Esophagus muscularis mucosa (tissue), 4 donors: ENCODE measurements at regions of chr13 and their contacts with region 1.

Region 1: GRCh38 chr13:112606109-112607001 is 18.4 kb upstream of the TUBGCP3 start:
- DNase-seq: peak; percentile 93
- H3K4me3 ChIP-seq: peak overlapping the region; percentile 52 to 61 (median 53)
- H3K27ac ChIP-seq: peak overlapping the region; percentile 65 to 81 (median 76)
- H3K4me1 ChIP-seq: peaks cover 8 to 13% (median 11%) of the 10 kb centered on the region in 4 donors
- H3K27me3 ChIP-seq: no peaks in the 10 kb centered on the region
- CTCF ChIP-seq: peak; percentile 94 to 96 (median 96)
- EP300 ChIP-seq: no peak
- POLR2A ChIP-seq: no peak

Region 2: DNA sequence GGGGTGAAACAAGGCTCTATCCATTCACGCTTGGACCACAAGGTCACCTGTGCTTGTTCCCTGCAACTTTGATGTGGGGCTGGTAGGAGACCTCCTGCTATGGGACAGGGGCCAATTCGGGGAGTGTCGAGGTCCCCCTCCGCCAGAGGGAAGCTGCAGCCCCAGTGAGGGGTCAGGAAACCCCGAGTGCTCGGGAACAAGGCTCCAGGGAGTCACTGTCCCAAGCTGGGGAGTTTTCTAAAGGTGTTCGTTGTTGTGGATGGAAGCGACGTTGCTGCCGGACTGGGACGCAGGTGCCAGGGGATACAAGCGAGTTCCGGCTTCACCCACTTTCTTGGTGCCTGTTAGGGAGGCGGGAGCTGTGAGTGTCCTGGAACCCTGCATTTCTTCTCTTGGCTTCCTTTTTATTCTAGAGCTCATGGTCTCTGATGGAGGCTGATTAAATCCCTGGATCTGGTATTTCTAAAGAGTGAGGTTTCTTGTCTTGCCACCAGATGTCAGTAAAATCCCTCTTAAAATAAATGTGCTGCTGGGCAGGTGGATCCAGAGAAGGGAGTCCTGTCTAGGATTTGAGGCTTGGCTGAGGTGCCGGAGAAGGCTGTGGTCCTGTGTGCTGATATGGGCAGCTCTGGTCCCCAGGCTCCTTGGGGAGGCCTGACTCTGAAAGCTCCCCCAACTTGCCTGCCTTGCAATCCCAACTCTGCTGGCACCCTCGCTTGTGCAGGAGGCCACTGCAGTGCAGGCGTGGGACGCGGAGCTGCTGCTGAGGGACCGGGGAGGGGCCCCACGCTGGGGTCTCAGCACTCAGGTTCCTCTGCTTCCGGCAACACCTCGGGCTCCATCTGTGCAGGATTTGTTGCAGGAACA is 1132.0 kb before region 1 on chr13:
- intact Hi-C with region 1: loop called (anchors 5 kb)
- DNase-seq: no peak
- H3K4me3 ChIP-seq: no peak overlapping the region
- H3K27ac ChIP-seq: no peak overlapping the region
- H3K4me1 ChIP-seq: no peaks in the 10 kb centered on the region
- H3K27me3 ChIP-seq: peaks cover 0 to 47% (median 0%) of the 10 kb centered on the region in 4 donors
- CTCF ChIP-seq: peak; percentile 44 to 59 (median 54)
- EP300 ChIP-seq: no peak
- POLR2A ChIP-seq: no peak

Region 3: GRCh38 chr13:112443995-112444860 is 162.1 kb before region 1 on chr13:
- intact Hi-C with region 1: loop called (anchors 5 kb)
- DNase-seq: peak; percentile 91
- H3K4me3 ChIP-seq: no peak overlapping the region
- H3K27ac ChIP-seq: no peak overlapping the region
- H3K4me1 ChIP-seq: peaks cover 0 to 15% (median 4%) of the 10 kb centered on the region in 4 donors
- H3K27me3 ChIP-seq: peaks cover 0 to 97% (median 22%) of the 10 kb centered on the region in 4 donors
- CTCF ChIP-seq: peak; percentile 80 to 83 (median 82)
- EP300 ChIP-seq: no peak
- POLR2A ChIP-seq: no peak

Region 4: DNA sequence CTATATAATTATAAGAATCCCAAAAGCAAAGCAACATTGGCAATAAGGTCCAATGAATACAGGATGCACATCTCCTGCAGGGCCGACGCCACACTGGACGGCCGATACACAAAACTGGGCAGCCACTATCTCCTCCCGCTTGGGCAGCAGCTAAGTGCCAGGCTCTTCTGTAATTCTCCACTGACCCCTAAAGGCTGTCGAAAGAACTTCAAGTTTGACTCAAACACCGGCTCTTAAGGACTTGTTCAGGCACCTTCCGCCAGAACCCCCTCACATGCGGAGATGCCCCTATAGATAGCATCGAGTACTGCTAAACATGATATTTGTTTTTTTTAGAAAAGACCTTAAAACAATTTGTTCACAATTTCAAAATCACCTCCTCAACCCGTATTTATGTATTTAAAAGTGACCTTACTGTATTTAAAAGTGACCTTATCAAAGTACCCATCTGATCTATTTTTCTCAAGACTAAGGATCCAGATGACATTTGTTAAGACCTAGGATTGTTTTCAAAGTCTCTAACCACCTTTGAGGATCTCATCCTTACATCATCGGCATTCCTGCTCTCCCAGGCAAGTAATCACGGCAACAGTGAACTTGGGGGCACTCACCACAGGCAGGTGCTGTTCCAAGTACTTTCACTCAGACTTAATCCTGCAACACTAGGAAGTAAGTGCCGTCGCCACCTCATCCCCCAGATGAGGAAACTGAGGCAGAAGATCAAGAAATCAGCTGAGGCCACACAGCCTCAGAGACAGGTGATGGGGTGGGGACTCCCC is 96.2 kb before region 1 on chr13:
- intact Hi-C with region 1: loop called (anchors 5 kb)
- DNase-seq: no peak
- H3K4me3 ChIP-seq: no peak overlapping the region
- H3K27ac ChIP-seq: no peak overlapping the region
- H3K4me1 ChIP-seq: peaks cover 0 to 11% (median 4%) of the 10 kb centered on the region in 4 donors
- H3K27me3 ChIP-seq: no peaks in the 10 kb centered on the region
- CTCF ChIP-seq: peak; percentile 29 to 52 (median 40)
- EP300 ChIP-seq: no peak
- POLR2A ChIP-seq: no peak

Region 5: GRCh38 chr13:112689303-112690165 is 83.2 kb after region 1 on chr13 and contains the start of gene ATP11A:
- intact Hi-C with region 1: no loop called
- DNase-seq: no peak
- H3K4me3 ChIP-seq: peak within 1 kb of the TSS; percentile 87 to 98 (median 92)
- H3K27ac ChIP-seq: peak within 1 kb of the TSS; percentile 89 to 96 (median 92)
- H3K4me1 ChIP-seq: peaks cover 37 to 48% (median 46%) of the 10 kb centered on the region in 4 donors
- H3K27me3 ChIP-seq: no peaks in the 10 kb centered on the region
- CTCF ChIP-seq: peak in 2 of 3 experiments; percentile 6 to 7
- EP300 ChIP-seq: no peak
- POLR2A ChIP-seq: peak; percentile 38
- total RNA-seq, gene ATP11A: 11.2 to 27.8 (median 14.3) TPM